ENCODE measurements at regions of chr1 and their contacts with region 1.

Region 1: GRCh38 chr1:89536555-89537341 is 12.1 kb downstream of the LRRC8B start:
- DNase-seq: peak; percentile 45
- H3K4me3 Mint-ChIP-seq: no peak overlapping the region
- H3K27ac Mint-ChIP-seq: peak overlapping the region; percentile 79
- H3K4me1 Mint-ChIP-seq: peaks cover 86% of the 10 kb centered on the region
- H3K27me3 Mint-ChIP-seq: no peaks in the 10 kb centered on the region

Region 2: GRCh38 chr1:89605692-89606091 is 68.9 kb after region 1 on chr1:
- CTCF ChIA-PET with region 1: interaction called, 3 read pairs
- intact Hi-C with region 1: loop called (anchors 1 kb)
- DNase-seq: no peak
- H3K4me3 Mint-ChIP-seq: no peak overlapping the region
- H3K27ac Mint-ChIP-seq: no peak overlapping the region
- H3K4me1 Mint-ChIP-seq: peaks cover 95% of the 10 kb centered on the region
- H3K27me3 Mint-ChIP-seq: no peaks in the 10 kb centered on the region